ENCODE measurements at regions of chr2 and their contacts with region 1.

Region 1: DNA sequence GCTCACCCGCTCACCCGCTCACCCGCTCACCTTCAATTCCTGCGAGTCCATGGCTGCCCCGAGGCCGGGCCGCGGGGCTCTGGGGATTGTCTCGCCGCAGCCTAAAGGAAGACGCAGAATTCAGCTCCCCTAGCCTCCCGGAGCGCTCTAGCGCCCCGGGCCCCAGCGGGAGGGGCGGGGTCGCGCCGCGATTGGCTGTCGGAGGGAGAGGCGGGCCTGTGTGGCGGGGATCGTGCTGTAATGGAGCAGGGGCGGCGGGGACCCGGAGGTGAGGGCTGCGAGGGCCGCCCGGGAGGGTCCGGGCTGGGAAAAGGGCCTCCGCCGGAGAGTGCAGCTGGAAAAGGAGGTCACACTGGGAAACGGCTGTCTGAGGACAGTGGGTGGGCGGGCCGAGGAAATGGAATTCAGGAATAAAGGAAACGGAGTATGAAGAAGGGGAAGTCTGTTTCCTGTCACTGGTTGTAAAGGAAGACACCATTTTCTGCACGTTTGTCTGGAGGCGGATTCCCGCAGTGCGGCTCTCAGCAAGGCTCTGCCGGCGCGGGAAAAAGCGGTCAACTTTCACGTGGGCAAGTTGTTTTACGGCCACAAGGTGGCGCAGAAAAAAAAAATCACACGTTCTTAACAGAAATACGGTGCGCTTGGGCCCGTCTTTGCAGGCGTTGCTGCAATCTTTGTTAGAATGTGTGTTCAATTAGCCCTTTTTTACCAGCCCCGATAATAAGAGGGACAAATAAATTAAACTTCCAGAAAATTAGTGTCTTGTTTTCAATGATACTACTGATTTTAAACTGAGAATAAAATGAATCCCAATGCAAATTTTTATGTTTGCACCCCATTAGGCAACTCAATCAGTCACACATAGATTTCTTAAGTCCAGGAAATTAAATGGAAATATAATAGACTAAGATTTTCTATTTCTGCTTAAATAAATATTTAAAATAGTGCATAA is at the start of gene TTC21B:
- DNase-seq: peak; percentile 92 to 97 (median 95)
- ATAC-seq: peak; percentile 98
- H3K4me3 ChIP-seq: peak within 1 kb of the TSS; percentile 91
- H3K4me3 Mint-ChIP-seq: peak within 1 kb of the TSS in 3 of 10 donors; percentile 59 to 63 (median 61)
- H3K27ac ChIP-seq: peak within 1 kb of the TSS; percentile 66
- H3K27ac Mint-ChIP-seq: peak within 1 kb of the TSS in 5 of 9 donors; percentile 33 to 71 (median 70)
- H3K4me1 ChIP-seq: peaks cover 22 to 25% of the 10 kb centered on the region in 2 donors
- H3K4me1 Mint-ChIP-seq: peaks cover 7 to 30% (median 12%) of the 10 kb centered on the region in 7 donors
- H3K27me3 ChIP-seq: no peaks in the 10 kb centered on the region
- H3K27me3 Mint-ChIP-seq: no peaks in the 10 kb centered on the region
- total RNA-seq, gene TTC21B: 23.0 to 38.9 (median 33.0) TPM

Region 2: DNA sequence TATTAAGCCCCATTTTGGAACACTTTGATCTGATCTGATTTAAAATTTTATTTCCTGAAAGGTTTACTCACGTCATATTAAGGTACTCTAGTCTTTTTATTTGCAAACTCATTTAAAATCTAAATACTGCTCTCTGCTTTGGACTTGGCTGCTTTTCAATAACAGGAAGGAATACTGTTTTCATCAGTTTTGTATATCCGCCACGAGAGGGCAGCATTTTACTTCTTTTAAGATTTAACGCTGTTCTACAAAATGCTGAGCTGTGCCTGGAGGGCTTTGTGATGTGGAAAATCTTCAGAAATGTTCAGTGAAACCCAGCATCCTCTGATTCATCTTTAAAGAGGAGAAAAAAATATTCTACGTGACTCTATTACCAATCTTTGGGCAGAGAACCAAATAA is 961.1 kb before region 1 on chr2:
- CTCF ChIA-PET with region 1: no interaction called
- POLR2A ChIA-PET with region 1: no interaction called
- intact Hi-C with region 1: loop called in 1 of 2 experiments (anchors 5 kb)
- DNase-seq: peak in 7 of 9 donors; percentile 29 to 54 (median 42)
- ATAC-seq: peak; percentile 68
- H3K4me3 ChIP-seq: no peak overlapping the region
- H3K4me3 Mint-ChIP-seq: no peak overlapping the region
- H3K27ac ChIP-seq: no peak overlapping the region
- H3K27ac Mint-ChIP-seq: no peak overlapping the region
- H3K4me1 ChIP-seq: no peaks in the 10 kb centered on the region
- H3K4me1 Mint-ChIP-seq: peaks cover 10 to 36% (median 16%) of the 10 kb centered on the region in 7 donors
- H3K27me3 ChIP-seq: no peaks in the 10 kb centered on the region
- H3K27me3 Mint-ChIP-seq: no peaks in the 10 kb centered on the region

Region 3: DNA sequence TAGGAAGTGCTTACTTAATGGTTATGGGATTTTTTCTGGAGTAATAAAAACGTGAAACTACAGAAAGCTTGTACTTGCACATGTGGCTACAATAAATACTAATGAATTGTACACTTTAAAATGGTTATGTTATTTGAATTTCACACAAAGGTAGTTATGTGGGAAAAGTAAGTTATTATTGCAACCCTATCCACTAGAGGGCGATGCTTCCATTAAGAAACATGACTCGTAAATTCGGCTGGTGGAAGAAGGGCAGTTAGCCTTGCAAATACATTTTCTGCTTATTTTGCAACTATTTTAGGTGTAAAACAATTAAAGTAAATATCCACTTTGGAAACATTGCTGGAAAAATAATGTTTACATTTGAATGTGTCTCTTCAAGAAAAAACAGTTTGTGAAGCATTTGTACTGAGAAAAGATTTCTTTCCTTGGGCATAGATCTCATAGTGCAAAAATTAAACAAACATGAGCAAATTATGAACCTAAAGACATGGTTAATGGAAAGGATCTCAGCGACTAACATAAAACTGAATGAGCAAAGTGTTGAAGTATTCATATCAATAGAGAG is 552.6 kb before region 1 on chr2:
- CTCF ChIA-PET with region 1: interaction called, 3 read pairs
- POLR2A ChIA-PET with region 1: no interaction called
- intact Hi-C with region 1: loop called in 1 of 2 experiments (anchors 10 kb)
- DNase-seq: peak in 7 of 9 donors; percentile 8 to 56 (median 39)
- ATAC-seq: peak; percentile 60
- H3K4me3 ChIP-seq: no peak overlapping the region
- H3K4me3 Mint-ChIP-seq: no peak overlapping the region
- H3K27ac ChIP-seq: no peak overlapping the region
- H3K27ac Mint-ChIP-seq: no peak overlapping the region
- H3K4me1 ChIP-seq: no peaks in the 10 kb centered on the region
- H3K4me1 Mint-ChIP-seq: peaks cover 0 to 3% (median 0%) of the 10 kb centered on the region in 7 donors
- H3K27me3 ChIP-seq: no peaks in the 10 kb centered on the region
- H3K27me3 Mint-ChIP-seq: peaks cover 14 to 35% (median 26%) of the 10 kb centered on the region in 5 donors

Region 4: DNA sequence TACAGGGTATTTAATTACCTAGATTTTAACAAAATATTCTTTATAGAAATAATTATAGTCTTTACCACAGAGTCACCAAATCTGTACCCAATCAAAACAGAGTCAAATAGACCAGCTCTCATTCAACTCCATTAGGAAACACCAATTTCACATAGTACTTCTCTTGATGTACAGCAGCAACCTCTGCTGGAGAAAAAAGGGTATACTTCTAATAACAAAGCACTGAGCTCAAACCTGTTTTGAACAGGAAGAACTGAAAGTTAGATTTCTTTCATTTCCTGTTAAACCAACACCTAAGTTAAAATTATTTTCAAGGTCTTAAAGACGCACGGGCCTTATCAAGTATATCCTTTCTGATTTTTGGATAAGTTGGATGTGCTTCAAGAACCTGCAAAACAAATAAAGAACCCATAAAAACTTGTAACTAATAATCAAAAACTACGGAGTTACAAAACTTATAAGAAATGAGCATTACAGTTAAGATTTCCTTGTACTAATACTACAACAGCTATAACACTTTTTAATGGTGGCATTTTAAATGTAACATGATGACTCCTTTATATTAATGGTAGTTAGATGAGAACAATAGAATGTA is 79.4 kb before region 1 on chr2:
- CTCF ChIA-PET with region 1: interaction called, 4 read pairs
- POLR2A ChIA-PET with region 1: no interaction called
- intact Hi-C with region 1: loop called (anchors 1 to 2 kb)
- DNase-seq: peak in 7 of 9 donors; percentile 29 to 70 (median 58)
- ATAC-seq: peak; percentile 91
- H3K4me3 ChIP-seq: no peak overlapping the region
- H3K4me3 Mint-ChIP-seq: peak overlapping the region in 6 of 10 donors; percentile 26 to 51 (median 36)
- H3K27ac ChIP-seq: no peak overlapping the region
- H3K27ac Mint-ChIP-seq: peak overlapping the region in 8 of 9 donors; percentile 41 to 88 (median 77)
- H3K4me1 ChIP-seq: peaks cover 0 to 7% of the 10 kb centered on the region in 2 donors
- H3K4me1 Mint-ChIP-seq: peaks cover 0 to 29% (median 27%) of the 10 kb centered on the region in 7 donors
- H3K27me3 ChIP-seq: no peaks in the 10 kb centered on the region
- H3K27me3 Mint-ChIP-seq: no peaks in the 10 kb centered on the region

Region 5: GRCh38 chr2:165911231-165911630 is 42.7 kb before region 1 on chr2:
- CTCF ChIA-PET with region 1: no interaction called
- POLR2A ChIA-PET with region 1: no interaction called
- intact Hi-C with region 1: no loop called
- DNase-seq: no peak
- ATAC-seq: no peak
- H3K4me3 ChIP-seq: no peak overlapping the region
- H3K4me3 Mint-ChIP-seq: no peak overlapping the region
- H3K27ac ChIP-seq: no peak overlapping the region
- H3K27ac Mint-ChIP-seq: no peak overlapping the region
- H3K4me1 ChIP-seq: no peaks in the 10 kb centered on the region
- H3K4me1 Mint-ChIP-seq: peaks cover 0 to 4% (median 0%) of the 10 kb centered on the region in 7 donors
- H3K27me3 ChIP-seq: no peaks in the 10 kb centered on the region
- H3K27me3 Mint-ChIP-seq: no peaks in the 10 kb centered on the region

Region 6: GRCh38 chr2:165970663-165971062 is 16.7 kb after region 1 on chr2:
- CTCF ChIA-PET with region 1: no interaction called
- POLR2A ChIA-PET with region 1: no interaction called
- intact Hi-C with region 1: loop called in 1 of 2 experiments (anchors 1 kb)
- DNase-seq: no peak
- ATAC-seq: no peak
- H3K4me3 ChIP-seq: no peak overlapping the region
- H3K4me3 Mint-ChIP-seq: no peak overlapping the region
- H3K27ac ChIP-seq: no peak overlapping the region
- H3K27ac Mint-ChIP-seq: no peak overlapping the region
- H3K4me1 ChIP-seq: no peaks in the 10 kb centered on the region
- H3K4me1 Mint-ChIP-seq: no peaks in the 10 kb centered on the region
- H3K27me3 ChIP-seq: no peaks in the 10 kb centered on the region
- H3K27me3 Mint-ChIP-seq: peaks cover 5 to 35% (median 23%) of the 10 kb centered on the region in 5 donors

Region 7: GRCh38 chr2:166106431-166107015 is 152.6 kb after region 1 on chr2:
- CTCF ChIA-PET with region 1: no interaction called
- POLR2A ChIA-PET with region 1: no interaction called
- intact Hi-C with region 1: loop called in 1 of 2 experiments (anchors 1 kb)
- DNase-seq: no peak
- ATAC-seq: peak; percentile 38
- H3K4me3 ChIP-seq: no peak overlapping the region
- H3K4me3 Mint-ChIP-seq: no peak overlapping the region
- H3K27ac ChIP-seq: no peak overlapping the region
- H3K27ac Mint-ChIP-seq: peak overlapping the region in 1 of 9 donors; percentile 27
- H3K4me1 ChIP-seq: no peaks in the 10 kb centered on the region
- H3K4me1 Mint-ChIP-seq: no peaks in the 10 kb centered on the region
- H3K27me3 ChIP-seq: no peaks in the 10 kb centered on the region
- H3K27me3 Mint-ChIP-seq: no peaks in the 10 kb centered on the region

Region 8: DNA sequence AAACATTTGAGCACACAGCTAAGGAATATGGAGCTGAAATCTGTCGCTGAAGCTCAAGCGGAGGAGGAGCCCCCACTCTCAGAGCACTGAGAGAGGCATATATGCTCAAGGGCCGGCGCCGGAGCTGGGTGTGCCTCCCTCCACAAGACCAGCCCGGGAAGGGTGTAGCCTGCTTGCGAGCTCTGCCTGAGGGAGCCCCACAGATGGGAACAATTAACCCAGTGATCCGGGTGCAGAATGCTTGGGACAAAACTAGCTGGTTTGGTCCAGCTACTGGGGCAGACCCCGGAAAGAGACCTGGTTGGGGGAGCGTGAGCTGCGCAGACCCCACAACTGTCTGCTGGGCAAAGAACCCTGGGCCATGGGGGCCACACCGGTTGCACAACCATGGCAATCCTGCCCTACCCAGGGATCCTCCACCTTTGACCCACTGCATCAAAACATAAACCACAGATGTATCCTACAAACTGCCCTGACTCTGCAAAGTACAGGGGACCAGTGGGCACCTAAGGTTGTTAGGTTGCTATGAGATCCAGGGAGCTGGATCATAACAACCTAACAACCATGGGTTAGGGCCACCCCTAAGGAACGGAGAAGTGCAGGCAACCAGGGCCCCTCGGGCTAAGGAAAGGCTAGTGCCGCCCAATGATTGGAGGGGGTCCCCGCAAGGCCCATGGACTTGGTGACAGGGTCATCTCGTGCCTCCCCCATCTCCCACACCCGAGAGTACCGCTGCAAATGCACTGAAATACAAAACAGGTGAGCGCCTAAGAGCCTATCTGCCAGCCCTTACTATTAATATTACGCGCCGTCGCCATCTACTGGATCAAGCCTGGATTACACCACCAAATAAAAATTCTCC is 227.3 kb after region 1 on chr2:
- CTCF ChIA-PET with region 1: no interaction called
- POLR2A ChIA-PET with region 1: no interaction called
- intact Hi-C with region 1: loop called in 1 of 2 experiments (anchors 2 kb)
- DNase-seq: peak in 1 of 9 donors; percentile 30
- ATAC-seq: peak; percentile 66
- H3K4me3 ChIP-seq: no peak overlapping the region
- H3K4me3 Mint-ChIP-seq: no peak overlapping the region
- H3K27ac ChIP-seq: no peak overlapping the region
- H3K27ac Mint-ChIP-seq: no peak overlapping the region
- H3K4me1 ChIP-seq: no peaks in the 10 kb centered on the region
- H3K4me1 Mint-ChIP-seq: no peaks in the 10 kb centered on the region
- H3K27me3 ChIP-seq: no peaks in the 10 kb centered on the region
- H3K27me3 Mint-ChIP-seq: peaks cover 2 to 27% (median 5%) of the 10 kb centered on the region in 5 donors